Colonic mucosa (tissue), 4 donors: ENCODE measurements at regions of chr20 and their contacts with region 1.

Region 1: DNA sequence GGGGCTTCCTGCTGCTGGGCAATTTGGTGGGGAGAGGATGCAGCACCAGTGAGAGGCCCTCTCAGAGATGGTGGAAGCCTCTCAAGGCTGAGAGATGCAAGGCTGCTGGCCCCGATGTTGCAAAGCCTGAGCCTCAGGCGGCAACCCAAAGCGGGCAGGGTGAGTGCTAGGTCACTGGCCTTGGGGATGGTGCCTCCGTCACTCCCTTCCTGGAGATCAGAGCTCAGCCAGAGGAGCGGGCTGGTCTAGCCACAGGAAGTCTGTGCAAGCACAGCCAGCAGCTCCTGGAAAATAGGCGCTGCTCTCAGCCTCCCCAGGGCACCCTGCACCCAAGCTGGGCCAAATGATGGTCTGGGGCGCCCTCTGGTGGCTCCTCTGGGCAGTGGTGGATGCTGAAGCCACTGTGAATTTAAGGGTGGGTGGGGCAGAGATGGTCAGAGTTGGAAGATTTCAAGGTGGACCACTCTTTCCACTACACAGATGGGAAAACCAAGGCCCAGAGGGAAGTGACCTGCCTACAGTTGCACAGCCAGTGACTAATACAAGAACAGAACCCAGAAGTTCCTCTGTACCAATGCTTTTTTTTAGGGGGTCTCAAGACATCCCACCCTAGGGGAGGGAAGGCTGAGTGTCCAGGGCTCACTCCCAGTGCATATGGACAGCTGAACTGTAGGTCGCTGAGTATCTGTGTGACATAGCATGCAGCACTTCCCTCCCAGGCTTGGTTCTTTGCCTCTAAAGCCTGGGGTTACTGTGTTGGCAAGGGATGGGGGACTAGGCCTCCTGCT is 20.8 kb downstream of the C20orf203 start:
- DNase-seq: peak; percentile 87
- H3K4me3 ChIP-seq: no peak overlapping the region
- H3K27ac ChIP-seq: no peak overlapping the region
- H3K4me1 ChIP-seq: no peaks in the 10 kb centered on the region
- H3K27me3 ChIP-seq: no peaks in the 10 kb centered on the region
- CTCF ChIP-seq: peak; percentile 97

Region 2: DNA sequence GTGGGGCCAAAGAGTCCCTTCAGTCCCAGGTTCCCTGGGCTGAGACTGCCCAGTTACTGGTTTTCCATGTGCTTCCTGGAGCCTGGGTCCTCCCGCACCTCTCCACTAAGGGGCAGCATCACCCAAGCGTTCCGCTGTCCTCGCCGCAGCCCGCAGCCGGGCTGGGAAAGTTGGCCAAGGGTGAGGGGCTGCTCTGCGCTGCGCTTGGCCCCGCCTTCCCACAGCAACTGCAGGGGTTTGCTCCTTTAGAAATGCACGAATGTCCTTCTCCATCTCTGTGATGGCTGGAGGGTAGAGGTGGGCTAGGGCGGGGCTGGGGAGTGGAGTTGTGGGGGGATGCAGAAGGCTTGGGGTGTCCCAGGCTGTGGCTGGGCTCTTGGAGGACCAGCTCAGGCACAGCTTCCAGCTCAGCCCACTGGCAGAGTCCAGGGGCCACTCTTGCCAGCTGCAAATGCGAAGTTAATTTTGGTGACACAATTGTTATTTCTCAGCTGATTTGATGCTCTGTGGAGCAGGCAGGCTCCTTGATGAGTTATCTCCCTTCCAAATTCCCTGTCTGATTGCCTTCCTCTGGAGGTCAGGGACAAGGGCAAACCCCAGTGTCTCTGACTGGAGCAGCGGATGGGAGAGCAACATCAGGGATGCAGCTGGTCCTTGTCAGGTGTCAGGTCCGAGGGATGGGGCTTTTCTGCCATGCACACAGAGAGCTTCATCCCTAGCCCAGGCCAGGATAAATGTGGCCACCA is 131.0 kb before region 1 on chr20:
- intact Hi-C with region 1: loop called (anchors 2 kb)
- DNase-seq: peak; percentile 69
- H3K4me3 ChIP-seq: no peak overlapping the region
- H3K27ac ChIP-seq: no peak overlapping the region
- H3K4me1 ChIP-seq: no peaks in the 10 kb centered on the region
- H3K27me3 ChIP-seq: no peaks in the 10 kb centered on the region
- CTCF ChIP-seq: peak; percentile 76